Heart right ventricle (tissue), 16 donors: ENCODE measurements at regions of chr16 and their contacts with region 1.

Region 1: GRCh38 chr16:82061861-82062525 is 26.9 kb downstream of the HSD17B2 start:
- DNase-seq: no peak
- ATAC-seq: no peak
- H3K4me3 ChIP-seq: no peak overlapping the region
- H3K27ac ChIP-seq: no peak overlapping the region
- H3K4me1 ChIP-seq: no peaks in the 10 kb centered on the region
- H3K27me3 ChIP-seq: peaks cover 0 to 21% (median 5%) of the 10 kb centered on the region in 7 donors
- CTCF ChIP-seq: peak in 8 of 9 donors; percentile 13 to 49 (median 34)

Region 2: GRCh38 chr16:81940781-81941560 is 121.0 kb before region 1 on chr16:
- intact Hi-C with region 1: loop called in 5 of 10 experiments (anchors 2 to 10 kb)
- DNase-seq: no peak
- ATAC-seq: peak in 1 of 8 donors; percentile 52
- H3K4me3 ChIP-seq: no peak overlapping the region
- H3K27ac ChIP-seq: no peak overlapping the region
- H3K4me1 ChIP-seq: peaks cover 0 to 7% (median 0%) of the 10 kb centered on the region in 9 donors
- H3K27me3 ChIP-seq: peaks cover 0 to 5% (median 0%) of the 10 kb centered on the region in 7 donors
- CTCF ChIP-seq: peak; percentile 9 to 67 (median 55)

Region 3: GRCh38 chr16:82456683-82457082 is 394.7 kb after region 1 on chr16:
- intact Hi-C with region 1: no loop called
- DNase-seq: peak; percentile 26 to 28
- ATAC-seq: peak in 7 of 8 donors; percentile 38 to 85 (median 75)
- H3K4me3 ChIP-seq: no peak overlapping the region
- H3K27ac ChIP-seq: no peak overlapping the region
- H3K4me1 ChIP-seq: no peaks in the 10 kb centered on the region
- H3K27me3 ChIP-seq: peaks cover 0 to 14% (median 8%) of the 10 kb centered on the region in 7 donors
- CTCF ChIP-seq: peak; percentile 39 to 81 (median 73)